Left colon (tissue), 2 donors: ENCODE measurements at regions of chr13 and their contacts with region 1.

Region 1: GRCh38 chr13:40982772-40983171 is 36.3 kb downstream of the ELF1 start:
- DNase-seq: peak in 1 of 2 donors; percentile 50
- ATAC-seq: peak; percentile 56

Region 2: DNA sequence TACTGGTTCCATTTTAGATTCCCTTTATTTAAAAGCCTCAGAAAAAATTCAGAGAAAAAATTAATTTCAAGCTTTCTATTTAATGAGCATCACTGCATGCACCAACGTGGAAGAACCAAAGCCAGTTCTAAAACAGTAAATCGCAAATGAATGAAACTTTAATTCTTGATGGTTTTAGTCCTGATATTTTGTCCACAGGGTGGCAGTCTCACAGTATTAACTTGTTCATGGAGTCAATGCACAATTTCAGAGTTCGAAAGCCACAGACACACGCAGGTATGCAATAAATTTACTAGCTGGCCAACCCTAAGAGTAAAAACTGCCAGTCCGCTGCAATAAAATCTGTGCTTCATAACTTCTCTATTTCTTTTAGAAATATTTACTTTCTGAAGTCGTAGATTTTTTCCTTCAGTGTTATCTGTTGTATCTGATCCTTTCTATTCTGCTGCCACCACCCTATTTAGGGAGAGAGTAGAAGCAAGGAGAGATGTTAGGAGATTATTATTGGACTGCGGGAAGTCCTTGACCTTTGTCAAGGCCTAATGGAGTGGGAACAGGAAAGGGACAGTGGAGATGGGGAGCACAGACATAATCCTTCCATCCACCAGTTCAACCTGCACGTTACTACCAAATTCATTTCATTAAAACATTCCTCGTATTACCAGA is 71.6 kb after region 1 on chr13:
- intact Hi-C with region 1: loop called in 1 of 2 experiments (anchors 10 kb)
- DNase-seq: peak; percentile 34 to 43
- ATAC-seq: peak; percentile 83

Region 3: DNA sequence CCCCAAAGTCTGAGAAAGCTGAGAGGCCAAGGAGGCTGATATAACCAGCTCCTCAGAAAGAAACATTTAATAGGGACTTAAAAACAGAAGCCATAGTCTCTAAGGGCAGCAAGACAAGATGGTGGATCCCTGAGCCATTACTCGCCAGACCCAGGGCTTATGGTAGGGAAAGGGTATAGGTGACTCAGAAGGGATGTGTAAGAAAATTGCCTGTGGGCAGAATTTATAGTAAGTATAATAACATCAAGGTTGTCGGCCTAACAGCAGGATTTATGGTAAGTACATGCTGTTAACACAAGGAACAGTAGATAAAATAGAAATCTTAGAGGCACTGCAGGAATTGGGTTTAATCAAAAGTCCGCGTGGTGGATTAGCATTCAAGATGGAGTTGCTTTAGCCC is 135.1 kb after region 1 on chr13:
- intact Hi-C with region 1: no loop called
- DNase-seq: no peak
- ATAC-seq: no peak